ENCODE measurements at regions of chr2 and their contacts with region 1.

Region 1: GRCh38 chr2:41741951-41742595 is 305.7 kb upstream of the PKDCC start:
- DNase-seq: no peak
- H3K4me3 ChIP-seq: no peak overlapping the region
- H3K27ac ChIP-seq: no peak overlapping the region
- H3K4me1 ChIP-seq: no peaks in the 10 kb centered on the region
- H3K27me3 ChIP-seq: no peaks in the 10 kb centered on the region
- CTCF ChIP-seq: no peak
- EP300 ChIP-seq: no peak
- POLR2A ChIP-seq: no peak

Region 2: DNA sequence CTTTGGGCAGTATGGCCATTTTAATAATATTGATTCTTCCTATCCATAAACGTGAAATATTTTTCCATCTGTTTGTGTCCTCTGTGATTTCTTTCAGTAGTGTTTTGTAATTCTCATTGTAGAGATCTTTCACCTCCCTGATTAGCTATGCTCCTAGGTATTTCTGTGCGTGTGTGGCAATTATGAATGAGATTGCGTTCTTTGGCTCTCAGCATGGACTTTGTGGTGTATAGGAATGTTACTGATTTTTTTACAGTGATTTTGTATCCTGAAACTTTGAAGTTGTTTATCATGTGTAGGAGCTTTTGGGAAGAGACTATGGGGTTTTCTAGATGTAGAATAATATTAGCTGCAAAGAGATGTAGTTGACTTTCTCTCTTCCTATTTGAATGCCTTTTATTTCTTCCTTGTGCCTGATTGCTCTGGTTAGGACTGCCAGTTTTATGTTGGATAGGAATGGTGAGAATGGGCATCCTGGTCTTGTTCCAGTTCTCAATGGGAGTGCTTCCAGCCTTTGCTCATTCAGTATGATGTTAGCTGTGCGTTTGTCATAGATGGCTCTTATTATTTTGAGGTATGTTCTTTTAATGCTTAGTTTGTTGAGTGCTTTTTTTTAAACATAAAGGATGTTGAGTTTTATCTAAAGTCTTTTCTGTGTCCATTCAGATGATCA is 1936.0 kb before region 1 on chr2:
- in situ Hi-C with region 1: no loop called
- intact Hi-C with region 1: loop called (anchors 10 kb)
- DNase-seq: no peak
- H3K4me3 ChIP-seq: no peak overlapping the region
- H3K27ac ChIP-seq: no peak overlapping the region
- H3K4me1 ChIP-seq: no peaks in the 10 kb centered on the region
- H3K27me3 ChIP-seq: no peaks in the 10 kb centered on the region
- CTCF ChIP-seq: no peak
- EP300 ChIP-seq: no peak
- POLR2A ChIP-seq: no peak